ENCODE measurements at regions of chr11 and their contacts with region 1.

Region 1: DNA sequence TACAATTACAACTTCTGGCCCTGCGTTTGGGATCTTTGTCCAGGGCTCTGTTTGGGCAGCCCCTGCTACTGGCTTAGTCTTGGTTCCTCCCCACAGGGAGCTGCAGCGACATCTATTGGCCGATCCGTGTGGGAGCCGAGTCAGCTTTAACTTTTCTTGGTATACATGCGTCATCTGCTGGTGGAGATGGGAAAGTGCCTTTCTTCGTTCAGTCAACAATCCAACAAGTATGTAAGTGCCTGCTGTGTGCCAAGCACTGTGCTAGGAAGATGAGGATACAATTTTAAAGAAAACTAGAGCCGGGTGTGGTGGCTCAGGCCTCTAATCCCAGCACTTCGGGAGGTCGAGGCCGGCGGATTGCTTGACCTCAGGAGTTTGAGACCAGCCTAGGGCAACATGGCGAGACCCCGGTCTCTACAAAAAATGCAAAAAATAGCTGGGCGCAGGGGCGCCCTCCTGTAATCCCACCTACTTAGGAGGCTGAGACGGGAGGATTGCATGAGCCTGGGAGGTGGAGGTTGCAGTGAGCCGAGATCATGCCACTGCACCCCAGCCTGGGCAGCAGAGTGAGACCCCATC is 8.2 kb downstream of the TPBGL start:
- DNase-seq: peak; percentile 92
- H3K4me3 ChIP-seq: no peak overlapping the region
- H3K27ac ChIP-seq: no peak overlapping the region
- H3K4me1 ChIP-seq: peaks cover 0 to 21% (median 12%) of the 10 kb centered on the region in 4 donors
- H3K27me3 ChIP-seq: no peaks in the 10 kb centered on the region
- CTCF ChIP-seq: peak; percentile 98 to 99 (median 99)
- EP300 ChIP-seq: no peak
- POLR2A ChIP-seq: no peak

Region 2: DNA sequence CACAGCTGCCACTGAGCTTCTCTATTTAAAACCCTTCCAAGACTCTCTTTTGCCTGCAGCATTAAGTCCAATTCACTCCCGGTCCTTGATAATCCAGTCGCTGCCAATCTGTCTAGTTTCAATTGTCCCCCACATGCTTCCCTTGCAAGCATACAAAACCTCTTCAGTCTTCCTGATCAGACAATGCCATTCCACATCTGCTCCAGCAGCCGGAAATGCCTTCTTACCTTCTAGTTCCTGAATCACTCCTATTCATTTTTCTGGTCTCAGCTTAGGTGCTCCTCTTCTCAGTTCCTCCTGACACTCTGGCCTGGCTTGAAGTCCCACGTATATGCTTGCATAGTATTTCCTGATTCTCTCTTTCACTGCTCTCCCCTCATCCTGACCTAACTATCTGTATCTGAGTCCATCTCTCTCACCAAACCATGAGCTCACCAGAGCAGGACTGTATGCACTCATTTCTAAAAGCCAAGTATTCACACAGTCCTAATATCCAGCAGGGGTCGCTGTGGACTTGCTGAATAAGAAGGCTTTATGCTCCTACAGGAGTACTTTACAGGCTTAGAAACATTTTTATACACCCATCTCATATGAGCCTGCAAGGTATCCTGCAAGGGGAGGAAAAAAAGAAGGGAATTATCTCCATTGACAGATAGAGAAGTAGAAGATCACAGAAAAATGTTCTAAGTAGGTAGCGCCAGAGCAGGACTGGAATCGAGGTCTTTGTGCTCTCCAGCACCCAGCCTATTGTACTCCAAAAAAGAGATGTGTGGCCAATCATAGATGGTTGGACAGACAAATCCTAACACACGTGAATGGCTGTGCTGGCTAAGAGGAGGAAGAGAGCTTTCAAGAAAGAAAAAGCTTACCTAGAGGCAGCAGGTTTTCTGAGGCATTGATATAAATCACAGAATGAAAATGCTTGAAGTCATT is 319.1 kb before region 1 on chr11:
- intact Hi-C with region 1: loop called (anchors 2 kb)
- DNase-seq: peak; percentile 83
- H3K4me3 ChIP-seq: no peak overlapping the region
- H3K27ac ChIP-seq: no peak overlapping the region
- H3K4me1 ChIP-seq: peaks cover 0 to 9% (median 0%) of the 10 kb centered on the region in 4 donors
- H3K27me3 ChIP-seq: no peaks in the 10 kb centered on the region
- CTCF ChIP-seq: peak; percentile 59 to 81 (median 76)
- EP300 ChIP-seq: no peak
- POLR2A ChIP-seq: no peak

Region 3: GRCh38 chr11:75022759-75023396 is 225.9 kb before region 1 on chr11:
- intact Hi-C with region 1: loop called (anchors 5 kb)
- DNase-seq: peak; percentile 79
- H3K4me3 ChIP-seq: no peak overlapping the region
- H3K27ac ChIP-seq: no peak overlapping the region
- H3K4me1 ChIP-seq: peaks cover 0 to 6% (median 0%) of the 10 kb centered on the region in 4 donors
- H3K27me3 ChIP-seq: no peaks in the 10 kb centered on the region
- CTCF ChIP-seq: peak; percentile 50 to 89 (median 84)
- EP300 ChIP-seq: no peak
- POLR2A ChIP-seq: no peak

Region 4: DNA sequence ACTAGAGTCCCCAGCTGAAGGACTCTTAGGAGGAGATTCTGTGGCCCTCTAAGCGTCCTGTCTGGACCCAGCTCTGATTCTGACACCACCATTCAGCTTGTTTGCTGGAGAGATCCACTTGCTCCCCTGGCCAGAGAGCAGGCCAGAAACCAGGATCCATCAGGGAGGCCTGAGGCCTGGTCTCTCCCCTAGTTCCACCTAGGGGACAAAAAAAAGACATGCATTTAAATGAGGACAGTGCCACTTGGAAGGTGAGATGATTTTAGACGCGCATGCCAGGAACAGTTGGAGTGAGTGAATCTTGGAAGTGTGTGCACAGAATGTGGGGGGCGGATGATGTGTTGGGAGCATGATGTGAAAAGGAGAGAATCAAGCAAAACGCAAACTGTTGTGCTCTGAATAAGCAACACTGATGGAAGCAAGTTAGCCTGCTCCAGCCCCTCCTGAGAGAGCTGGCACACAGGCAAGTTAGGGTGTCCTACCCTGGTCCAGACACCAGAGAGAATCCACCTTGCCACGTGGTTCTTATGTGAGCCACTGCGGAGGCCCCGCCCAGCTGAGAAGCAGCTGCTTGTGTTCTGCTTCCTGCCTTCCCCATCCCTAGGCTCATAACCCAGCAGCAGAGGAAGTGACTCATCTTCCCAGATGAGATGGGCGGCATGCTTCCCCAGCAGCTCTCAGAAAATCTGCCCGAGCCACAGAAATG is 105.9 kb before region 1 on chr11:
- intact Hi-C with region 1: loop called (anchors 1 kb)
- DNase-seq: peak; percentile 88
- H3K4me3 ChIP-seq: no peak overlapping the region
- H3K27ac ChIP-seq: peak overlapping the region in 2 of 4 donors; percentile 1 to 22
- H3K4me1 ChIP-seq: no peaks in the 10 kb centered on the region
- H3K27me3 ChIP-seq: no peaks in the 10 kb centered on the region
- CTCF ChIP-seq: no peak
- EP300 ChIP-seq: no peak
- POLR2A ChIP-seq: no peak

Measured in sigmoid colon (tissue), 7 donors.